ENCODE measurements at regions of chr19 and their contacts with region 1.

Region 1: DNA sequence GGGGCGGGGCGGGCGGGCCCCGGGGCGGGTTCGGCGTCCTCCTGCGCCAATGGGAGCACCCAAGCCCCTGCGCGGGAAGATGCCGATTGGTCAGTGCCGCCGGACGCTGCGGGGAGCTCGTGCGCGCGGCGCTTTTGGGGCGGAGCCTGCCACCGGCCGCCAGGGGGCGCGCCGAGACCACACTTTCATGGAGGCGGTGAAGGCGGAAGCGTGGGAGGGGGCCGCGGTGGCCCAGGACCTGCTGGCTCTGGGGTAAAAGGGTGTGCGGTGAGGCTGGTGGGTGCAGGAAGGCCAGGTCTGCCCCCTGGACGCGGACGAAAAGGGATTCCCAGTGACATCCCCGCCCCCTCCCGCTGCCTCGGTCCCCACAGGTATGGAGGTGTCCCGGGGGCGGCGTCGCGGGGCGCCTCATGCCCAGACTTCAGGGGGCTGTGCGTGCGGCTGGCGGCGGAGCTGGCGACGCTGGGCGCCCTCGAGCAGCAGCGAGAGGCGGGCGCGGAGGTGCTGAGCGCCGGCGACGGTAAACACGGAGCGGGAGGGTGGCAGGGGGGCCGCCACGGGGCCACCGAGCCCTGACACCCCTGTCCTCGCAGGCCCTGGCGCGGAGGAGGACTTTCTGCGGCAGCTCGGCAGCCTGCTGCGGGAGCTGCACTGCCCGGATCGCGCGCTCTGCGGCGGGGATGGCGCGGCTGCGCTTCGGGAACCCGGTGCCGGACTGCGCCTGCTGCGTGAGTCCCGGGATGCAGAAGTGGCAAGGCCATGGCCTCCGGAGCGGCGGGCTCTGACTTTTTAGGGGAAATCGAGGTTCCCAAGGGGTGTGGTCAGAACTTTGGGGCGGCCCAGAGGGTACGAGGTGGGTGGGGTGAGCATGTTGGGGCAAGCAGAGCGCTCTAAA is at the start of gene FAM98C:
- DNase-seq: peak; percentile 99
- ATAC-seq: peak; percentile 97
- H3K4me3 ChIP-seq: peak within 1 kb of the TSS; percentile 41 to 85 (median 75)
- H3K4me3 Mint-ChIP-seq: peak within 1 kb of the TSS; percentile 94
- H3K27ac ChIP-seq: peak within 1 kb of the TSS; percentile 61 to 79
- H3K27ac Mint-ChIP-seq: peak within 1 kb of the TSS; percentile 94
- H3K4me1 ChIP-seq: peaks cover 5 to 14% of the 10 kb centered on the region in 2 donors
- H3K4me1 Mint-ChIP-seq: peaks cover 18% of the 10 kb centered on the region
- H3K27me3 ChIP-seq: peaks cover 0 to 20% (median 7%) of the 10 kb centered on the region in 4 experiments
- H3K27me3 Mint-ChIP-seq: peaks cover 18% of the 10 kb centered on the region
- CTCF ChIP-seq: peak; percentile 99
- total RNA-seq, gene FAM98C: 44.1 and 45.3 TPM in 2 replicates

Region 2: DNA sequence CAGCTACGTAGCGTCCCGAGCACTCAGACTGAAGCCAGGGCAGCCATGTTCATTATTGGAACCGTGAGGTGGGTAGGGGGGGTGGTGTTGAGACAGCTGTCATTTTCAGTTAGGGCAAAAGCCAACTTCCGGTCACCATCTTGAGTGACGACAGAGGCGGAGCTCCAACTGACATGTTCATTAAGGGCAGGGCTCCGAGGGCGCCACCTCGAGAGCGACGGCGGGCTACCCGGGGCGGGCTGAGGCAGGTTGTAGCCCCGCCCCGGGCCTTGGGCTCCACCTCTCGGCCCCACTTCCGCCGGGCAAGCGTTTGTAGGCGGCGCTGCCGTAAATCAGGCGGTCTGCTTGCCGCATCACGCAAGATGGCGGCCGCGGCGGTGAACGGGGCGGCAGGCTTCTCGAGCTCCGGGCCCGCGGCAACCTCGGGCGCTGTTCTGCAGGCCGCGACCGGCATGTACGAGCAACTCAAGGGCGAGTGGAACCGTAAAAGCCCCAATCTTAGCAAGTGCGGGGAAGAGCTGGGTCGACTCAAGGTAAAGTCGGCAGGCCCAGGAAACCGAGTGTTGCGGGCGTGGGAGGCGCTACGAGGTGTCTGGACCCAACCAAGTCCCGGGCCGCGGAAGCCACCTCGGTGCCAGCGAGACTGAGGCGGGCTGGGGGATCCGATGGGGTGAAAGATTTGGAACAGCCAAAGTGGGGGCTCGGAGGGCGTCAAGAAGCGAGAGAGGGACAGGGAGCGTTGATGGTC is 28.6 kb before region 1 on chr19 and contains the start of gene PSMD8:
- CTCF ChIA-PET with region 1: interaction called, 27 read pairs
- POLR2A ChIA-PET with region 1: interaction called, 10 read pairs
- intact Hi-C with region 1: loop called (anchors 1 kb)
- DNase-seq: peak; percentile 100
- ATAC-seq: peak; percentile 97
- H3K4me3 ChIP-seq: peak within 1 kb of the TSS; percentile 69 to 92 (median 80)
- H3K4me3 Mint-ChIP-seq: peak within 1 kb of the TSS; percentile 93
- H3K27ac ChIP-seq: peak within 1 kb of the TSS; percentile 88 to 90
- H3K27ac Mint-ChIP-seq: peak within 1 kb of the TSS; percentile 96
- H3K4me1 ChIP-seq: peaks cover 17 to 26% of the 10 kb centered on the region in 2 donors
- H3K4me1 Mint-ChIP-seq: peaks cover 26% of the 10 kb centered on the region
- H3K27me3 ChIP-seq: peaks cover 0 to 12% (median 0%) of the 10 kb centered on the region in 4 experiments
- H3K27me3 Mint-ChIP-seq: peaks cover 6% of the 10 kb centered on the region
- CTCF ChIP-seq: peak; percentile 18
- total RNA-seq, gene PSMD8: 77.1 and 88.1 TPM in 2 replicates

Region 3: GRCh38 chr19:38452428-38453366 is 49.5 kb after region 1 on chr19:
- CTCF ChIA-PET with region 1: no interaction called
- POLR2A ChIA-PET with region 1: no interaction called
- intact Hi-C with region 1: no loop called
- DNase-seq: no peak
- ATAC-seq: no peak
- H3K4me3 ChIP-seq: no peak overlapping the region
- H3K4me3 Mint-ChIP-seq: no peak overlapping the region
- H3K27ac ChIP-seq: no peak overlapping the region
- H3K27ac Mint-ChIP-seq: no peak overlapping the region
- H3K4me1 ChIP-seq: no peaks in the 10 kb centered on the region
- H3K4me1 Mint-ChIP-seq: no peaks in the 10 kb centered on the region
- H3K27me3 ChIP-seq: no peaks in the 10 kb centered on the region
- H3K27me3 Mint-ChIP-seq: peaks cover 3% of the 10 kb centered on the region
- CTCF ChIP-seq: no peak

Region 4: DNA sequence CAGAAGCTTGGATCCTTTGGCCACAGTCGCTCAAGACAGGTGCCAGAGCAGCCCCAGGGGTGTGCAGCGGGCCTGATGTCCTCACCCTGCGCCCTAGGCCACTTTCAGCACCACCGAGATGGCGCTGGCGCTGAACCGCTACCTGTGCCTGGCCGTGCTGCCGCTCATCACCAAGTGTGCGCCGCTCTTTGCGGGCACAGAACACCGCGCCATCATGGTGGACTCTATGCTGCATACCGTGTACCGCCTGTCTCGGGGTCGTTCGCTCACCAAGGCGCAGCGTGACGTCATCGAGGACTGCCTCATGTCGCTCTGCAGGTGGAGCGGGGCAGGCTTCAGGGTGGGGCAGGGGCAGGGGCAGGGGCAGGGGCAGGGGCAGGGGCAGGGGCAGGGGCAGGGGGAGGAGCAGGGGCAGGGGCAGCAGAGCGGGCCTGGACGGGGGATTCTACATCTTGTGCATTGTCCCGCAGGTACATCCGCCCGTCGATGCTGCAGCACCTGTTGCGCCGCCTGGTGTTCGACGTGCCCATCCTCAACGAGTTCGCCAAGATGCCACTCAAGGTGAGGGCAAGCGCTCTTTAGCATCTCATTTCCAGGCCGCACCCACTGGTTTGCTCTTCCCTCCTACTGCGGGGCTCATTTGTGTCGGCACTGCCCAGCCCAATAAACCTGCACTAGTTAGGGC is 99.3 kb after region 1 on chr19:
- CTCF ChIA-PET with region 1: no interaction called
- POLR2A ChIA-PET with region 1: no interaction called
- intact Hi-C with region 1: no loop called
- DNase-seq: no peak
- ATAC-seq: no peak
- H3K4me3 ChIP-seq: no peak overlapping the region
- H3K4me3 Mint-ChIP-seq: no peak overlapping the region
- H3K27ac ChIP-seq: no peak overlapping the region
- H3K27ac Mint-ChIP-seq: no peak overlapping the region
- H3K4me1 ChIP-seq: peaks cover 3 to 8% of the 10 kb centered on the region in 2 donors
- H3K4me1 Mint-ChIP-seq: peaks cover 6% of the 10 kb centered on the region
- H3K27me3 ChIP-seq: no peaks in the 10 kb centered on the region
- H3K27me3 Mint-ChIP-seq: no peaks in the 10 kb centered on the region
- CTCF ChIP-seq: no peak

Region 5: GRCh38 chr19:38514812-38515633 is 111.8 kb after region 1 on chr19:
- CTCF ChIA-PET with region 1: interaction called, 31 read pairs
- POLR2A ChIA-PET with region 1: no interaction called
- intact Hi-C with region 1: loop called (anchors 1 kb)
- DNase-seq: peak; percentile 82
- ATAC-seq: peak; percentile 92
- H3K4me3 ChIP-seq: no peak overlapping the region
- H3K4me3 Mint-ChIP-seq: peak overlapping the region; percentile 37
- H3K27ac ChIP-seq: no peak overlapping the region
- H3K27ac Mint-ChIP-seq: no peak overlapping the region
- H3K4me1 ChIP-seq: peaks cover 4 to 7% of the 10 kb centered on the region in 2 donors
- H3K4me1 Mint-ChIP-seq: peaks cover 6% of the 10 kb centered on the region
- H3K27me3 ChIP-seq: peaks cover 0 to 8% (median 0%) of the 10 kb centered on the region in 4 experiments
- H3K27me3 Mint-ChIP-seq: peaks cover 4% of the 10 kb centered on the region
- CTCF ChIP-seq: peak; percentile 87

Region 6: GRCh38 chr19:38640368-38640767 is 237.2 kb after region 1 on chr19:
- CTCF ChIA-PET with region 1: interaction called, 90 read pairs
- POLR2A ChIA-PET with region 1: interaction called, 3 read pairs
- intact Hi-C with region 1: no loop called
- DNase-seq: no peak
- ATAC-seq: no peak
- H3K4me3 ChIP-seq: no peak overlapping the region
- H3K4me3 Mint-ChIP-seq: no peak overlapping the region
- H3K27ac ChIP-seq: no peak overlapping the region
- H3K27ac Mint-ChIP-seq: no peak overlapping the region
- H3K4me1 ChIP-seq: peaks cover 14 to 22% of the 10 kb centered on the region in 2 donors
- H3K4me1 Mint-ChIP-seq: peaks cover 19% of the 10 kb centered on the region
- H3K27me3 ChIP-seq: no peaks in the 10 kb centered on the region
- H3K27me3 Mint-ChIP-seq: no peaks in the 10 kb centered on the region
- CTCF ChIP-seq: no peak

Region 7: GRCh38 chr19:38729653-38730469 is 326.6 kb after region 1 on chr19:
- CTCF ChIA-PET with region 1: interaction called, 6 read pairs
- POLR2A ChIA-PET with region 1: no interaction called
- intact Hi-C with region 1: loop called (anchors 5 kb)
- DNase-seq: peak; percentile 84
- ATAC-seq: peak; percentile 68
- H3K4me3 ChIP-seq: no peak overlapping the region
- H3K4me3 Mint-ChIP-seq: no peak overlapping the region
- H3K27ac ChIP-seq: no peak overlapping the region
- H3K27ac Mint-ChIP-seq: peak overlapping the region; percentile 39
- H3K4me1 ChIP-seq: peaks cover 16 to 23% of the 10 kb centered on the region in 2 donors
- H3K4me1 Mint-ChIP-seq: peaks cover 23% of the 10 kb centered on the region
- H3K27me3 ChIP-seq: no peaks in the 10 kb centered on the region
- H3K27me3 Mint-ChIP-seq: no peaks in the 10 kb centered on the region
- CTCF ChIP-seq: peak; percentile 85

Region 8: DNA sequence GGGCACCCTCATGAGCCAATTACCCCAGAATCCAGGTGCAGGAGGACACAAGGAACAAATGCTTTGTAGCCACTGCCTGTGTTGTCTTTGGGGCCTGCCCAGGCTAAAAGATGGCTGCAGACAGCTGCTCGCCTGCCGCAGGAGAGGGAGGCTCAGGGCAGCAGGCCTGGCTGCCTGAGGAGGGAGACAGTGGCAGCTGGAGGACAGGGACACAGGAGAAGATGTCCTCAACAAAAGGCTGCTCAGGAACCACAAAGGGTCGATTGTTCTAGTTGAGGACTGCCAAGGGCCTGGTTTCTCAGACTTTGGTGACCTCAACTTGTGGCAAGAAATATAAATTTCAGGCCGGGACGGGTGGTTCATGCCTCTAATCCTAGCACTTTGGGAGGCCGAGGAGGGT is 488.6 kb after region 1 on chr19:
- CTCF ChIA-PET with region 1: interaction called, 21 read pairs
- POLR2A ChIA-PET with region 1: no interaction called
- intact Hi-C with region 1: no loop called
- DNase-seq: no peak
- ATAC-seq: no peak
- H3K4me3 ChIP-seq: no peak overlapping the region
- H3K4me3 Mint-ChIP-seq: no peak overlapping the region
- H3K27ac ChIP-seq: no peak overlapping the region
- H3K27ac Mint-ChIP-seq: no peak overlapping the region
- H3K4me1 ChIP-seq: peaks cover 3 to 11% of the 10 kb centered on the region in 2 donors
- H3K4me1 Mint-ChIP-seq: peaks cover 4% of the 10 kb centered on the region
- H3K27me3 ChIP-seq: no peaks in the 10 kb centered on the region
- H3K27me3 Mint-ChIP-seq: no peaks in the 10 kb centered on the region
- CTCF ChIP-seq: no peak

Region 9: DNA sequence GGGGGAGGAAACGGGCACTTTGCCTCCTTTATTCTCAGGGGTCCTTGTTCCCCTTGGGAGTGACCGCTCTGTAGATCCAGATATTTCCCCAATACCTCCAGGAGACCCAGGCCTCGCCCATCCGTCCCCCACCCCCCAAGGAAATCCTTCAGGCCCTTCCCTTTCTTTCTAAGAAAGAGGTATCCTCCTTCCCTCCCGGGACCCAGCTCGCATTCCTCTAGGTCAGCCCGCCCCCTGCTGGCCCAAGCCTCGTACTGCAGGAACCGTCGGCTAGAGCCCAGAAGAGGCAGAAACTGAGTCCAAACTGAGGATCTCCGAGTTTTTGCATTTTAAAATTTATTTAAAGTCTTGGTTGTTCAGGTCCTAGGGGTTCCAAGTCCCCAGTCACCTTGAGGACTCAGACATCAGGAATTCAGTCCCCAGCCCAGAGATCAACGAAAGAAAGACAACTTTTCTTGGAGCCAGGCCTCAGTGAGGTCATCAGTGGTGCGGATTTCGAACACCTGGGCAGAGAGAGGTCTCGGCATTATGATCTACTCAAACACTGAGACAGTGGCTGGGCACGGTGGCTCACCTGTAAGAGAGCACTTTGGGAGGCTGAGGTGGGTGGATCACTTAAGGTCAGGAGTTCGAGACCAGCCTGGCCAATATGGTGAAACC is 925.0 kb after region 1 on chr19:
- CTCF ChIA-PET with region 1: no interaction called
- POLR2A ChIA-PET with region 1: no interaction called
- intact Hi-C with region 1: loop called (anchors 5 kb)
- DNase-seq: peak; percentile 78
- ATAC-seq: peak; percentile 92
- H3K4me3 ChIP-seq: no peak overlapping the region
- H3K4me3 Mint-ChIP-seq: no peak overlapping the region
- H3K27ac ChIP-seq: no peak overlapping the region
- H3K27ac Mint-ChIP-seq: no peak overlapping the region
- H3K4me1 ChIP-seq: peaks cover 5 to 11% of the 10 kb centered on the region in 2 donors
- H3K4me1 Mint-ChIP-seq: peaks cover 30% of the 10 kb centered on the region
- H3K27me3 ChIP-seq: no peaks in the 10 kb centered on the region
- H3K27me3 Mint-ChIP-seq: no peaks in the 10 kb centered on the region
- CTCF ChIP-seq: peak; percentile 94